CD8-positive, alpha-beta memory T cell (primary cell): ENCODE measurements at regions of chr22 and their contacts with region 1.

Region 1: GRCh38 chr22:38479096-38479837 is 11.4 kb downstream of the KDELR3 start:
- DNase-seq: no peak
- H3K4me3 ChIP-seq: no peak overlapping the region
- H3K4me3 Mint-ChIP-seq: no peak overlapping the region
- H3K27ac ChIP-seq: no peak overlapping the region
- H3K27ac Mint-ChIP-seq: peak overlapping the region in 3 of 8 donors; percentile 23 to 75 (median 70)
- H3K4me1 ChIP-seq: no peaks in the 10 kb centered on the region
- H3K4me1 Mint-ChIP-seq: peaks cover 11 to 18% (median 12%) of the 10 kb centered on the region in 3 donors
- H3K27me3 ChIP-seq: no peaks in the 10 kb centered on the region
- H3K27me3 Mint-ChIP-seq: no peaks in the 10 kb centered on the region

Region 2: GRCh38 chr22:37561212-37562048 is 917.8 kb before region 1 on chr22:
- CTCF ChIA-PET with region 1: no interaction called
- POLR2A ChIA-PET with region 1: interaction called, 11 read pairs
- DNase-seq: peak; percentile 59 to 80 (median 70)
- H3K4me3 ChIP-seq: peak overlapping the region; percentile 32
- H3K4me3 Mint-ChIP-seq: peak overlapping the region; percentile 58 to 85 (median 76)
- H3K27ac ChIP-seq: peak overlapping the region; percentile 57
- H3K27ac Mint-ChIP-seq: peak overlapping the region in 3 of 8 donors; percentile 23 to 53 (median 36)
- H3K4me1 ChIP-seq: peaks cover 26% of the 10 kb centered on the region
- H3K4me1 Mint-ChIP-seq: peaks cover 15 to 35% (median 16%) of the 10 kb centered on the region in 3 donors
- H3K27me3 ChIP-seq: peaks cover 26% of the 10 kb centered on the region
- H3K27me3 Mint-ChIP-seq: peaks cover 34 to 60% of the 10 kb centered on the region in 2 donors

Region 3: DNA sequence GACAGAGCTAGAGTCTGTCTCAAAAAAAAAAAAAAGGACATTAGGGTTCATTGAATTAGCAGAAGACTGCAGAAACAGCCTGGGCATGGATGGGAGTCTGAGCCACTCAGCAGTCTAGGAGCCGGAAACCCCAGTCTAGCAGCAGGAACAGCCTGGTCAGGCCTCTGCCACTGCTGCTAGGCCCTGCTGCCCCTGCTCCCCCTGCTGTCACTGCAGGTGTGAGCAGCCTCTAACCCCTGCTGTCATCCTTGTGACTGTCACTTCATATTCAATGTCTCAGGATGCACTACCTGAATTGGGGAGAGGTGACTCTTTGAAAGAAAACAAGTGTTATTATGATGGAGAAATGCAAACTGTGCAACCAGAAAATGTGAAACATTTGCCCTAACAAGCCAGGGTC is 33.8 kb after region 1 on chr22:
- CTCF ChIA-PET with region 1: no interaction called
- POLR2A ChIA-PET with region 1: no interaction called
- DNase-seq: peak; percentile 13 to 61 (median 44)
- H3K4me3 ChIP-seq: no peak overlapping the region
- H3K4me3 Mint-ChIP-seq: no peak overlapping the region
- H3K27ac ChIP-seq: no peak overlapping the region
- H3K27ac Mint-ChIP-seq: no peak overlapping the region
- H3K4me1 ChIP-seq: no peaks in the 10 kb centered on the region
- H3K4me1 Mint-ChIP-seq: peaks cover 5 to 6% (median 5%) of the 10 kb centered on the region in 3 donors
- H3K27me3 ChIP-seq: no peaks in the 10 kb centered on the region
- H3K27me3 Mint-ChIP-seq: no peaks in the 10 kb centered on the region